IMR-90 (cell line): ENCODE measurements at regions of chr6 and their contacts with region 1.

Region 1: DNA sequence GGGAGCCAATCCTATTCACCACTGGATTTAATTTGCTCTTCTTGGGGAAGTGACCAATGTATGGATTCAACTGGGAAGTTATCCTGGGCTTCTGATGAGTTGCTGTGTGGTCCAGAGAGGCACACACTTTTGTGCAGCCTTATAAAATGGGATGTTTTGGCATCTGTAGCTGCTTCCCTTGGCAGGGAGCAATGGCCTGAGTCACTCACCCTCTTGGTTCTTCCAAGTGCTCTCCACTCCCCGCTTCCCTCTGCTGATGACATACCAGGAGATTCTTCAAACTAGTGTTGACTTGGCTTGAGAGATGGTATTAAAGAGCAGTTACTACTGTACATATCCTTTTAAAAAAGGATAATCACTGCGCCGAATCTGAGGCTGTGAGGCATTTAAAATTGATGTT is 105.8 kb downstream of the JARID2 start:
- DNase-seq: peak; percentile 91
- ATAC-seq: peak; percentile 89
- H3K4me3 ChIP-seq: no peak overlapping the region
- H3K27ac ChIP-seq: no peak overlapping the region
- H3K4me1 ChIP-seq: peaks cover 22% of the 10 kb centered on the region
- H3K27me3 ChIP-seq: no peaks in the 10 kb centered on the region
- CTCF ChIP-seq: no peak
- POLR2A ChIP-seq: no peak
- RAD21 ChIP-seq: no peak

Region 2: DNA sequence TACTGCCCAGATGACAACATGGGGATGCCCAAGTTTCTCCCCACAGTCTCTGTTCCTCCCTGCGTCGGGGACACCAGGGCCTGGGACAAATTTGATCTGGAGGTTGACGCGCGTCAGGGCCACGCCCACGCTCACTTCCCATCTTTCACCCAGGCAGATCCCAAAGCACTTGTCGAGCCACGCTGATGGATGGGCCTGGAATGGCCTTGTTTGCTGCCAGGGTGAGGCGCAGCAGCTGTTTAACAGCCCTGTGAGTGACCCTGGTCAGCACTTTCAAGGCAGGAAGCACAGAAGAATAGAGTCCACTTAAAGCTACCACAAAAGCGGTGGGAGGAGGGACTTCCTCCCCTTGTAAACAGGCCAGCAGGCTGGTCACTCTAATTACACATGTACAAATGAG is 430.5 kb before region 1 on chr6:
- CTCF ChIA-PET with region 1: no interaction called
- POLR2A ChIA-PET with region 1: no interaction called
- dilution Hi-C with region 1: no loop called
- in situ Hi-C with region 1: no loop called
- intact Hi-C with region 1: no loop called
- DNase-seq: peak; percentile 12
- ATAC-seq: no peak
- H3K4me3 ChIP-seq: no peak overlapping the region
- H3K27ac ChIP-seq: no peak overlapping the region
- H3K4me1 ChIP-seq: peaks cover 16% of the 10 kb centered on the region
- H3K27me3 ChIP-seq: no peaks in the 10 kb centered on the region
- CTCF ChIP-seq: no peak
- POLR2A ChIP-seq: no peak
- RAD21 ChIP-seq: no peak

Region 3: GRCh38 chr6:15287670-15288375 is 63.8 kb before region 1 on chr6:
- CTCF ChIA-PET with region 1: no interaction called
- POLR2A ChIA-PET with region 1: no interaction called
- dilution Hi-C with region 1: no loop called
- in situ Hi-C with region 1: no loop called
- intact Hi-C with region 1: loop called (anchors 5 kb)
- DNase-seq: no peak
- ATAC-seq: no peak
- H3K4me3 ChIP-seq: no peak overlapping the region
- H3K27ac ChIP-seq: no peak overlapping the region
- H3K4me1 ChIP-seq: peaks cover 13% of the 10 kb centered on the region
- H3K27me3 ChIP-seq: no peaks in the 10 kb centered on the region
- CTCF ChIP-seq: no peak
- POLR2A ChIP-seq: no peak
- RAD21 ChIP-seq: no peak

Region 4: GRCh38 chr6:16212276-16212675 is 860.6 kb after region 1 on chr6:
- CTCF ChIA-PET with region 1: no interaction called
- POLR2A ChIA-PET with region 1: no interaction called
- dilution Hi-C with region 1: no loop called
- in situ Hi-C with region 1: no loop called
- intact Hi-C with region 1: loop called (anchors 5 kb)
- DNase-seq: no peak
- ATAC-seq: no peak
- H3K4me3 ChIP-seq: no peak overlapping the region
- H3K27ac ChIP-seq: no peak overlapping the region
- H3K4me1 ChIP-seq: peaks cover 5% of the 10 kb centered on the region
- H3K27me3 ChIP-seq: 0 out of 2 replicates have a peak, but pooled peaks cover 1% of the 10 kb centered on the region
- CTCF ChIP-seq: no peak
- POLR2A ChIP-seq: no peak
- RAD21 ChIP-seq: no peak